ENCODE measurements at regions of chr3 and their contacts with region 1.

Region 1: GRCh38 chr3:65996589-65996988 is 42.1 kb downstream of the MAGI1 start:
- DNase-seq: no peak
- ATAC-seq: no peak
- H3K4me3 ChIP-seq: no peak overlapping the region
- H3K27ac ChIP-seq: no peak overlapping the region
- H3K4me1 ChIP-seq: no peaks in the 10 kb centered on the region
- H3K27me3 ChIP-seq: no peaks in the 10 kb centered on the region
- CTCF ChIP-seq: no peak

Region 2: DNA sequence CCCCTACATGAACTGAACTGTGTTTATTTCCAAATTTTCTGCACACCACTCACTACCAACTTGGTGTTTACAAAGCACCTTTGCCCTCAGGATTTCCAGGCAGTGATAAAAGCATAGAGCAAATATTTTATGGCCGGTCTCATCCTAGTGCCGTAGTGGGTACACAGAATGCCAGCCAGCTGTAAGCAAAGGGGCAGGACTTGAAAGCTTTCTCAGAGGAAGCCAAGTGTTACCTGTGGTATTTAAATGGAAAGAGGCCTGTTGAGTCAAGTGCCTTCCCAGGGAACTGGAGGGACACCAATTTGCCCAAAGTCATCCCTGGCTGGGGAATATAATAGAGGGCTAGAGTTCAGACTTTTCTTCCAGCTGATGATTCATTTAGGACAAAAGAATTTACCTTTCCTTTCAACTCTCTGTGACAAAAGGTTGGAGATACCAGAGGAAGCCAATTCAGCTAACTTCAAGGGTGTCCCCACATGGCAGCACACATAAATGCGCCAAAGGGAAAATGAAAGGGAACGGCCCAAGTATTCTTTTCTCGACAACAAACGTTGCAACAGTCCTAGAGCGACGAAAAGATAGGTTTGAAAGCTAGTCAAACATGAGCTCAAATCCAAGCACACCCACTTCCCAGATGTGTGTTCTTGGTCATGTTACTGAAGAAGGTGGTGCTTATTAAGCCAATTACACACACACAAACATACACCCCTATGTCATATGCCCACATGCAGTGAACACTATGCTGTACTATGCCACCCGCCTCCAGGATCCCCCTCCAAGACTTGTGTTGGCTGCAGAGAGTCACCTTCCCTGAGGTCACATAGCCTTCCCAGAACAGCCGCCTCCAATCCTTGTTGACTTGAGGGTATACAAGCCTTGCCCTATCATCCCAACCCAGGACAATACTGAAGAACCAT is 14.4 kb after region 1 on chr3:
- CTCF ChIA-PET with region 1: no interaction called
- POLR2A ChIA-PET with region 1: interaction called, 14 read pairs
- in situ Hi-C with region 1: no loop called
- intact Hi-C with region 1: no loop called
- DNase-seq: no peak
- ATAC-seq: no peak
- H3K4me3 ChIP-seq: no peak overlapping the region
- H3K27ac ChIP-seq: no peak overlapping the region
- H3K4me1 ChIP-seq: no peaks in the 10 kb centered on the region; the same call in 1 of the 2 replicates
- H3K27me3 ChIP-seq: no peaks in the 10 kb centered on the region
- CTCF ChIP-seq: no peak

Region 3: DNA sequence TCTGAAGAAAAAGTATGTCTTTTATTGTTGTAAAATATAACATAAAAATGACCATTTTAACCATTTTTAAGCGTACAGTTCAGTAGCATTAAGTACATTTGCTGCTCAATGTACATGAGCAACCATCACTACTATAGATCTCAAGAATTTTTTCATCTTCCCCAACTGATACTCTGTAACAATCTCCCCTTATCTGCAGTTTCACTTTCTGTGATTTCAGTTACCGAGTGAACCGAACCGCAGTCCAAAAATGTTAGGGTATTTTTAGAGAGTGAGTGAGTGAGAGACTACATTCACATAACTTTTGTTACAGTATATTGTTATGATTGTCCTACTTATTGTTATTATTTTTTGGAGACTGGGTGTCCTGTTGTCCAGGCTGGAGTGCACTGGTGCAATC is 215.2 kb after region 1 on chr3:
- CTCF ChIA-PET with region 1: no interaction called
- POLR2A ChIA-PET with region 1: no interaction called
- in situ Hi-C with region 1: no loop called
- intact Hi-C with region 1: no loop called
- DNase-seq: no peak
- ATAC-seq: no peak
- H3K4me3 ChIP-seq: no peak overlapping the region
- H3K27ac ChIP-seq: no peak overlapping the region
- H3K4me1 ChIP-seq: no peaks in the 10 kb centered on the region
- H3K27me3 ChIP-seq: no peaks in the 10 kb centered on the region
- CTCF ChIP-seq: no peak